ENCODE measurements at regions of chr16 and their contacts with region 1.

Region 1: GRCh38 chr16:25224731-25225319 is 8.1 kb downstream of the AQP8 start:
- DNase-seq: no peak
- ATAC-seq: no peak
- H3K4me3 Mint-ChIP-seq: no peak overlapping the region
- H3K27ac Mint-ChIP-seq: no peak overlapping the region
- H3K4me1 Mint-ChIP-seq: peaks cover 2% of the 10 kb centered on the region
- H3K27me3 Mint-ChIP-seq: no peaks in the 10 kb centered on the region

Region 2: DNA sequence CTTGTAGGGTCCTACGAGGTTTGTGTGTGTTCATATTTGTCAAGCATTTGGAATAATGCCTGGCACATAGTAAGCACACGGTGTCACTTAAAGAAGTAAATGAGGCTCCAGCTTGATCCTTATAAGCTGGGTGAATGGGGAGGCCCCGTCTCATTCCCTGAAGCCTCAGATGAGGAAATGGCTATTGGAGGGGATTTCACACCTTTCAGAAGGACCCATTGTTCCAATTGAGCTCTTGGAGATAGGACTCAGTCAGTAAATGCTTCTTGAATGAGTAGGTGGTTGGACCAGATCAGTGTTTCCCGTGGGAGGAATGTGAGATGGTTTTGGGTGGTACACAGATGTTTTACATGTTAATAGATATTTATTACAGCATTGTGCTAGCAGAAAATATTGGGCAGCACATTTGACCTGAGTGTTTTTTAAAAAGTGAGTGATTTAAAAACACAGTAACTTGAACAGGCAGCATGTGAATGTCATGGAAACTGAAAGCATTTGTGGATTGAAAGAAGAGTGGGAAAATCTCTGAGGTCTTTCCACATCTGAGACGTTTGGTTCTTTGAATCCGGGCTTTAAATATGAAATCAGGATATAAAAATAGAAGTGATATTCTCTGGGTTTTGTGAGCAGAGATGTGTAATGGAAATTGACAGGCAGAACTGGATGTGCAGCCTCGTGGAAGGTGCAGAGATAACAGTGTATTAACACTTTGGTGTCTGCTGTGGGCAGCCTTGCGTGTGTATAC is 173.2 kb before region 1 on chr16:
- CTCF ChIA-PET with region 1: interaction called, 30 read pairs
- DNase-seq: no peak
- ATAC-seq: peak; percentile 13
- H3K4me3 Mint-ChIP-seq: peak overlapping the region; percentile 66
- H3K27ac Mint-ChIP-seq: peak overlapping the region; percentile 88
- H3K4me1 Mint-ChIP-seq: peaks cover 53% of the 10 kb centered on the region
- H3K27me3 Mint-ChIP-seq: no peaks in the 10 kb centered on the region

Region 3: DNA sequence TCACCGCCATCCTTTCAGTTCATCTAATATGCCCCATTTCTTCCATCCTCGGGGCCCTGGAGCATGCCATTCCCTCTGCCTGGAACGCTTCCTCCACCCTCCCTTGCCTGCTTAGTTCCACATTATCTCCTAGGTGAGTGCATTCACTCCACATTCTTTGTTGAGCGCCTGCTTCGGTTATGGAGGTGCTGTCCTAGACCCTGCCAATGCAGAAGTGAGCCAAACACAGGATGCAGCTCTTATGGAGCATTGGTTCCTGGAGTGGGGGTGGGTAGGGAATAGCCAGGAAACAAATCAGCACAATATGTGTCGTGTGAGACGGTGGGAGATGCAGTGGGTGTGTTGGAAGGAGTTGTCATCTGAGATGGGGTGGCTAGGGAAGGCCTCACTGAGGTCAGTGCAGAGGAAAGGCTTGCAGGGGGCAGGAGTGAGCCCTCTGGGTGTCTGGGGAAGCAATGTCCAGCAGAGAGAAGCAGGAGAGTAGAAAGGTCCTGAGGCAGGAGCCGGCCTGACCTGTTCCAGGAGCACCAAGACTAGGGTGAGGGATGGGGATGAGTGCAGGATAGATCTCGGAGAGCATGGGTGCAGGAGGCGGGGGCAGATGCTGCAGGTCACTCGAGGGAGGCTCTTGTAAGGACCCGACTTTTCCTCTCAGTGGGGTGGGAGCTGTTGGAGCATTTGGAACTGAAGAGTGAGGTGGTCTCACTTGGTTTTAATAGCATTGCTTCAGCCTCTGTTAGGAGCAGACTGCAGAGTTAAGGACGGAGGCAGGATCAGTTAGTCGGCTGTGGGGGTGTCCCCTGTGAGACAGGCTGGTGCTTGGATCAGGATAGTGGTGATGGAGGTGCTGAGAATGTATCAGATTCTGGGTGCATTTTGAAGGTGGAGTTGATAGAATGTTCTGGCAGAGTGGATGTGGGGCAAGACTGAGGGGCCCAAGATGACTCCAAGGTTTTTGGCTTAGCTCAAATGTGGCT is 106.3 kb before region 1 on chr16:
- CTCF ChIA-PET with region 1: interaction called, 11 read pairs
- DNase-seq: no peak
- ATAC-seq: no peak
- H3K4me3 Mint-ChIP-seq: no peak overlapping the region
- H3K27ac Mint-ChIP-seq: no peak overlapping the region
- H3K4me1 Mint-ChIP-seq: peaks cover 25% of the 10 kb centered on the region
- H3K27me3 Mint-ChIP-seq: no peaks in the 10 kb centered on the region

Region 4: DNA sequence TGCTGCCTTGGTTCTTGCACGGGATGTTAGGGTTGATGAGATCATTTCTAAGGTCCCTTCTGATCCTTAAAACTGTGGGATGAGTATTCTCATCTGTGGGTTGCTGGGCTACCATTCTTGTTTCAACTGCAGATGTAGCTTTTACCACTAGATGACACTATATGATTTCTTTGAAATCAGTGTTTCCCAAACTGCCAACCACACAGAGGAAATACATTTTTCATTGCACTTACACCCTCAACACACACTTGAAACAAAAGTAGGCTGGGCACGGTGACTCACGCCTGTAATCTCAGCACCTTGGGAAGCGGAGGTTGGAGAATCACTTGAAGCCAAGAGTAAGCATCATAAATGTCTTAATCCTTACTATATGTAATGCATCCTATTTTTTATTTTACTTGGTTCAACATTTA is 98.0 kb before region 1 on chr16:
- CTCF ChIA-PET with region 1: interaction called, 54 read pairs
- DNase-seq: peak; percentile 54
- ATAC-seq: peak; percentile 81
- H3K4me3 Mint-ChIP-seq: no peak overlapping the region
- H3K27ac Mint-ChIP-seq: peak overlapping the region; percentile 44
- H3K4me1 Mint-ChIP-seq: peaks cover 28% of the 10 kb centered on the region
- H3K27me3 Mint-ChIP-seq: no peaks in the 10 kb centered on the region

Region 5: GRCh38 chr16:25213709-25214397 is 11.0 kb before region 1 on chr16:
- CTCF ChIA-PET with region 1: interaction called, 10 read pairs
- DNase-seq: no peak
- ATAC-seq: no peak
- H3K4me3 Mint-ChIP-seq: no peak overlapping the region
- H3K27ac Mint-ChIP-seq: no peak overlapping the region
- H3K4me1 Mint-ChIP-seq: peaks cover 3% of the 10 kb centered on the region
- H3K27me3 Mint-ChIP-seq: no peaks in the 10 kb centered on the region

Region 6: GRCh38 chr16:25235991-25236390 is 11.2 kb after region 1 on chr16:
- CTCF ChIA-PET with region 1: interaction called, 19 read pairs
- DNase-seq: no peak
- ATAC-seq: no peak
- H3K4me3 Mint-ChIP-seq: no peak overlapping the region
- H3K27ac Mint-ChIP-seq: no peak overlapping the region
- H3K4me1 Mint-ChIP-seq: no peaks in the 10 kb centered on the region
- H3K27me3 Mint-ChIP-seq: no peaks in the 10 kb centered on the region

Region 7: GRCh38 chr16:25279491-25279890 is 54.7 kb after region 1 on chr16:
- CTCF ChIA-PET with region 1: no interaction called
- DNase-seq: no peak
- ATAC-seq: no peak
- H3K4me3 Mint-ChIP-seq: no peak overlapping the region
- H3K27ac Mint-ChIP-seq: no peak overlapping the region
- H3K4me1 Mint-ChIP-seq: no peaks in the 10 kb centered on the region
- H3K27me3 Mint-ChIP-seq: no peaks in the 10 kb centered on the region

Region 8: DNA sequence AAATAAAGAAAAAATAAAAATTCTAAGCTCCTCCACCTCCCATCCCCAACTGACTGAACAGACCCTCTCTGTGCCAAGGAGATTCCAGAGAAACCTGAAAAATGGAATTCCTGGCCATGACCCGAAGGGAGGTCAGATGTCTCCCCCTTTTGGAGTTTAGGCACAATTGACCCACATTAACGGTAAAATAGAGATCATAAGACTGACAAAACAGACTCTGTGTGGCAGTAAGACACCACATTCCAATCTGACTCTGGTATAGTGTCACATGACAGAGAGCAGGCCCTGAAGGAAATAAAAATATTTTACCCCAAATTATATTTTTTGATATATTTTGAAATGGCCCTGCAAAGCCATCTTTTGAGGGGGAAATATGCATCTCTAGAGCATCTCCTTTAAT is 147.9 kb after region 1 on chr16:
- CTCF ChIA-PET with region 1: no interaction called
- DNase-seq: no peak
- ATAC-seq: no peak
- H3K4me3 Mint-ChIP-seq: no peak overlapping the region
- H3K27ac Mint-ChIP-seq: no peak overlapping the region
- H3K4me1 Mint-ChIP-seq: no peaks in the 10 kb centered on the region
- H3K27me3 Mint-ChIP-seq: no peaks in the 10 kb centered on the region